IMR-90 (cell line): ENCODE measurements at regions of chr4 and their contacts with region 1.

Region 1: DNA sequence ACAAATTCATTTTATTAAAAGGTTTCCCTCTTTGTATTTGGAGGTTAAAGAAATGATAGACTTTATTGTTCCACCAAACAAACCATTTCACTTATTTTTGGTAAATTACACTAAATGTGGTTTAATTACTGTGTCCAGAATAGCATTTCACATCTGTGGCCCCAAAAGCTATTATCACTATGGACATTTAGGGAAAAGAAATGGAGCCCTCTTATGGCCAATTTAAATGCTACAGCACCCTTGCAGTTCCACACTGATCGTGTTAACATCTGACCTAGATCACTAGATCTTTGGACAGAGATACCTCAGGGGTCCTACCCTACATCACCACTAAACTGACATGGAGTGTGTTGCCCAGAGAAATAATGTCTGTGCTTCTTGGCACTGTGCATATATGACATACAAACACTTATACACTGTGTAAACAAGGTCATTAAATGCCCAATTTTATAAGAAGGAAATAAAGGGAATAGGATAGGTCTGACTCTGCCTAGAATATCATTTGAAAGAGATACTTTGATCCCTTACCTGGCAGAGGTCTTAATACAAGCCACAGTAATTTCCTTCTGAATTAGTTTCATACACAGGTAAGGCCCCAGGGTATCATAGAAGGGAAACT is 163.9 kb downstream of the KDR start:
- DNase-seq: peak; percentile 52
- ATAC-seq: peak; percentile 42
- H3K4me3 ChIP-seq: no peak overlapping the region
- H3K27ac ChIP-seq: no peak overlapping the region
- H3K4me1 ChIP-seq: peaks cover 10% of the 10 kb centered on the region
- H3K27me3 ChIP-seq: peaks cover 8% of the 10 kb centered on the region
- CTCF ChIP-seq: peak; percentile 79
- POLR2A ChIP-seq: no peak
- RAD21 ChIP-seq: peak; percentile 80

Region 2: GRCh38 chr4:54384563-54384962 is 576.9 kb before region 1 on chr4:
- CTCF ChIA-PET with region 1: interaction called, 3 read pairs
- POLR2A ChIA-PET with region 1: no interaction called
- dilution Hi-C with region 1: no loop called
- in situ Hi-C with region 1: no loop called
- intact Hi-C with region 1: loop called (anchors 1 kb)
- DNase-seq: peak; percentile 39
- ATAC-seq: peak; percentile 85
- H3K4me3 ChIP-seq: no peak overlapping the region
- H3K27ac ChIP-seq: no peak overlapping the region
- H3K4me1 ChIP-seq: no peaks in the 10 kb centered on the region
- H3K27me3 ChIP-seq: no peaks in the 10 kb centered on the region
- CTCF ChIP-seq: peak; percentile 44
- POLR2A ChIP-seq: no peak
- RAD21 ChIP-seq: peak; percentile 58

Region 3: DNA sequence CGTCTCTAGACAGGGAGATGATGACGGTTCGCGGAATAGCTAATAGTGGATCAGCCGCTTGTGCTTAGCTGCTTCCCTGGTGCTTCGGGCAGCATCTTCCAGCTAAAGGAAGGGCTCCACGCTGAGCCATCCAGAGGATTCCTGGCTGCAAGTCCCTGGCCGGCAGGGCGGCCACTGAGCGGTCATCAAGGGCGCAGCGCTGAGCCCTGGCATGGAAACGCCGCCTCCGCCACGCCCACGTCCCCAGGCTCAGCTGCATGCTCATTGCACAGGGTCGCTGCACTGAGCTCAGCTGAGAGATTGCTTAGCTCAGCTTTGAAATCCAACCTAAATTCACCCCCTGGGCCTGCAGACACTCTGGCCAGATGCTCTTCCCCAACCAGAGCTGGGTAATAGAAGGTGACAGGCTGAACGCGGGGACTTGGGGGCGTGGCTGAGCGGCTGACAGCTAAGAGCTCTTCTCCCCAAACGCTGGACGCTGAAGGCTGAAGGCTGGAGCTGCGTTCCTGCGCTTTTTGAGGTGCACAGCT is 421.9 kb before region 1 on chr4:
- CTCF ChIA-PET with region 1: no interaction called
- POLR2A ChIA-PET with region 1: no interaction called
- dilution Hi-C with region 1: no loop called
- in situ Hi-C with region 1: no loop called
- intact Hi-C with region 1: loop called (anchors 2 kb)
- DNase-seq: peak; percentile 46
- ATAC-seq: peak; percentile 79
- H3K4me3 ChIP-seq: peak overlapping the region; percentile 42
- H3K27ac ChIP-seq: no peak overlapping the region
- H3K4me1 ChIP-seq: peaks cover 21% of the 10 kb centered on the region
- H3K27me3 ChIP-seq: no peaks in the 10 kb centered on the region
- CTCF ChIP-seq: no peak
- POLR2A ChIP-seq: no peak
- RAD21 ChIP-seq: no peak

Region 4: DNA sequence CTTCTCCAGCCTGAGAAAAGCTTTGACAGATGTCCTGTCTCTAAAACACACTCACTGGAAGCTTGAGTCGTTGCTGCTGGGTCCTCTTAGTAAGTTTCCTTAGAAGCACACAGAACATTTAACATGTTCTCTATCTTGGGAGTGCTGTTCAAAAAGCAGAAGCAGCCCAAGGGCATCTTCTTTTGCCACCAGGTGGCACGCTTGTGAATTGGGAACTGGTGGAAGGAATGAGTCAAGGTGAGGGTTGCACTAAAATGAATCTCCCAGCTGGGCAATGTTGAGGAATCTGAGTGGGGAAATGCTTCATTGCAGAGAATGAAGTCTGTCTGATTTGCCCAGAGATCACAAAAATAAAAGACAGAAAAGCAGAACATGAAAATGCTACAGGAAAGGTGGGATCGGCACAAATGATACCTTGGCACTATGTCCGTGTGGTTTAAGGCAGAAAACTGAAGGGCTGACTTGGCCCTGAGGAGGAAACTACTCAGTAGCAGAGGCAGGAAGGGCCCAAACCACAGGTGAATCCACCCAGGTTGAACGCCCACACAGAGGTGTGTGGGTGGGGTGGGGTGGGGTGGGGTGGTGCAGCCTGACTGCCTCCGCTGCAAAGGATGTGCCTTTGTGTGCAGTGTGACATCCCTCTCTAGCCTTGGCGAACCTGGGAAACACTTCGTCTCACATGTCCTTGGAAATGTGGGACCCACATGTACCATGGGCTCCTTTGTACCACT is 277.7 kb before region 1 on chr4:
- CTCF ChIA-PET with region 1: no interaction called
- POLR2A ChIA-PET with region 1: no interaction called
- dilution Hi-C with region 1: no loop called
- in situ Hi-C with region 1: no loop called
- intact Hi-C with region 1: loop called (anchors 1 kb)
- DNase-seq: no peak
- ATAC-seq: no peak
- H3K4me3 ChIP-seq: no peak overlapping the region
- H3K27ac ChIP-seq: no peak overlapping the region
- H3K4me1 ChIP-seq: no peaks in the 10 kb centered on the region
- H3K27me3 ChIP-seq: no peaks in the 10 kb centered on the region
- CTCF ChIP-seq: peak; percentile 35; the same call in 1 of the 2 replicates
- POLR2A ChIP-seq: no peak
- RAD21 ChIP-seq: peak; percentile 31; the same call in 1 of the 2 replicates

Region 5: GRCh38 chr4:54879576-54879975 is 81.9 kb before region 1 on chr4:
- CTCF ChIA-PET with region 1: interaction called, 3 read pairs
- POLR2A ChIA-PET with region 1: no interaction called
- dilution Hi-C with region 1: no loop called
- in situ Hi-C with region 1: no loop called
- intact Hi-C with region 1: loop called (anchors 5 kb)
- DNase-seq: peak; percentile 87
- ATAC-seq: peak; percentile 98
- H3K4me3 ChIP-seq: no peak overlapping the region
- H3K27ac ChIP-seq: no peak overlapping the region
- H3K4me1 ChIP-seq: peaks cover 4% of the 10 kb centered on the region
- H3K27me3 ChIP-seq: no peaks in the 10 kb centered on the region
- CTCF ChIP-seq: no peak
- POLR2A ChIP-seq: no peak
- RAD21 ChIP-seq: no peak

Region 6: GRCh38 chr4:55169352-55169961 is 208.0 kb after region 1 on chr4:
- CTCF ChIA-PET with region 1: no interaction called
- POLR2A ChIA-PET with region 1: no interaction called
- dilution Hi-C with region 1: no loop called
- in situ Hi-C with region 1: no loop called
- intact Hi-C with region 1: no loop called
- DNase-seq: peak; percentile 50
- ATAC-seq: peak; percentile 76
- H3K4me3 ChIP-seq: no peak overlapping the region
- H3K27ac ChIP-seq: no peak overlapping the region
- H3K4me1 ChIP-seq: peaks cover 2% of the 10 kb centered on the region
- H3K27me3 ChIP-seq: no peaks in the 10 kb centered on the region
- CTCF ChIP-seq: no peak
- POLR2A ChIP-seq: no peak
- RAD21 ChIP-seq: no peak